Common myeloid progenitor, CD34-positive (primary cell): ENCODE measurements at regions of chrX and their contacts with region 1.

Region 1: GRCh38 chrX:153539171-153539978 is 21.9 kb downstream of the ATP2B3 start:
- DNase-seq: peak; percentile 27 to 63 (median 59)
- H3K4me3 ChIP-seq: no peak overlapping the region
- H3K27ac ChIP-seq: no peak overlapping the region
- H3K4me1 ChIP-seq: no peaks in the 10 kb centered on the region
- H3K27me3 ChIP-seq: peaks cover 0 to 31% (median 0%) of the 10 kb centered on the region in 5 experiments

Region 2: GRCh38 chrX:153361781-153362397 is 177.5 kb before region 1 on chrX:
- CTCF ChIA-PET with region 1: no interaction called
- POLR2A ChIA-PET with region 1: no interaction called
- DNase-seq: no peak
- H3K4me3 ChIP-seq: no peak overlapping the region
- H3K27ac ChIP-seq: no peak overlapping the region
- H3K4me1 ChIP-seq: no peaks in the 10 kb centered on the region
- H3K27me3 ChIP-seq: peaks cover 0 to 9% (median 0%) of the 10 kb centered on the region in 5 experiments

Region 3: DNA sequence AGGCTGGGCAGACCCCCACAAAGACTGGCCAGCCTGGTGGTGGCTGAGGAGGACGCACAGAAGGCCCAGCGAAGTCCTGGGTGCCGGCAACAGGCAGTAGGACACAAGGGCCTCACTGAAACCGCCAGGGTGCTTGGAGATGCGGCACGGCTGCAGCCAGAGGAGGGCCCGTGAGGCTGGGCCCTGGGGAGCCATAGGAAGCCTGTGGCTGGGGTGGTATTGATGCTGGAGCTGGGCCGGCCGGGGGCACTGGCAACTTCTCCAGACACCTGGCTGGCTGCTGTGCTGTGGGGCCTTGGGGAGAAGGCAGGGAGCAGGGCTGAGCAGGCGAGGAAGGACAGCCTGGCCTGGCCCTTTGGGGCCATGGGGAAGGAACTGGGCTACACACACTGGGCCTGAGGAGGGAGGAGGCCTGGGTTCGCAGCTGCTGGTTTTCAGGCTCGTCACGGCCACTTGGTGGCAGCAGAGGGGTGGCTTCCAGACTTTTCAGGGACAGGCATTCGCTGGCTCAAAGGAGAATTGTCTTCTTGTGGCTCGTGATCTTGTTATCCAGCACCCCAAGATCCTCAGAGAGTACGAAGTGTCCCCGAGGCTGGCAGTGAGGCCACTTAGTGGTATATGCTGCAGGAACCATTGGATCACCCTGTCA is 15.3 kb after region 1 on chrX:
- CTCF ChIA-PET with region 1: interaction called, 28 read pairs
- POLR2A ChIA-PET with region 1: no interaction called
- DNase-seq: peak; percentile 48 to 76 (median 69)
- H3K4me3 ChIP-seq: no peak overlapping the region
- H3K27ac ChIP-seq: no peak overlapping the region
- H3K4me1 ChIP-seq: peaks cover 0 to 7% (median 2%) of the 10 kb centered on the region in 4 experiments
- H3K27me3 ChIP-seq: peaks cover 0 to 4% (median 0%) of the 10 kb centered on the region in 5 experiments